Left colon (tissue), 2 donors: ENCODE measurements at regions of chr6 and their contacts with region 1.

Region 1: GRCh38 chr6:161694995-161695394 is 421.1 kb upstream of the AGPAT4 start:
- DNase-seq: no peak
- ATAC-seq: no peak

Region 2: DNA sequence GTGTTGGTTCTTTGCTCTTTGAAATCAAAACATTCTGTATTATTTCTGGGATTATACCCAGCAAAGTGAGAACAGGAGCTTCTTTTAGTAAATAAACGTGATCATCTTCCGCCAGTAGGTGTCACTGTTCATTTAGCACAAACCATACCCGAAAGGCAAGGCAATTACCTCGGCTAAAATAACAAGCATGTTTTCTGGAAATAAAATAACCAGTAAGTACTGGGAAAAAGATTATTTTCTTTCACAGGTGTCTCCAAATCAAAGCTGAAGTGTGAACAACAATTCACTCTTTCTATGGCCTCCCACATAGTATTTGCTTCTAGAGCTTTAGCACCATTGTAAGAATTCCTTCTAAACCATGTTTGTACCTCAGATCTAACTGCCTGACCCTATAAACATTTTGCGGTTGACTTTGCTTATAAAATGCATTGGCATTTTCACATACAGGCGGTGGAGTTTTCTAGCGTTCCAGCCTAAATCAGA is 276.5 kb before region 1 on chr6:
- intact Hi-C with region 1: loop called in 1 of 2 experiments (anchors 10 kb)
- DNase-seq: peak in 1 of 2 donors; percentile 10
- ATAC-seq: peak; percentile 39